Endothelial cell of umbilical vein (primary cell): ENCODE measurements at regions of chr19 and their contacts with region 1.

Region 1: DNA sequence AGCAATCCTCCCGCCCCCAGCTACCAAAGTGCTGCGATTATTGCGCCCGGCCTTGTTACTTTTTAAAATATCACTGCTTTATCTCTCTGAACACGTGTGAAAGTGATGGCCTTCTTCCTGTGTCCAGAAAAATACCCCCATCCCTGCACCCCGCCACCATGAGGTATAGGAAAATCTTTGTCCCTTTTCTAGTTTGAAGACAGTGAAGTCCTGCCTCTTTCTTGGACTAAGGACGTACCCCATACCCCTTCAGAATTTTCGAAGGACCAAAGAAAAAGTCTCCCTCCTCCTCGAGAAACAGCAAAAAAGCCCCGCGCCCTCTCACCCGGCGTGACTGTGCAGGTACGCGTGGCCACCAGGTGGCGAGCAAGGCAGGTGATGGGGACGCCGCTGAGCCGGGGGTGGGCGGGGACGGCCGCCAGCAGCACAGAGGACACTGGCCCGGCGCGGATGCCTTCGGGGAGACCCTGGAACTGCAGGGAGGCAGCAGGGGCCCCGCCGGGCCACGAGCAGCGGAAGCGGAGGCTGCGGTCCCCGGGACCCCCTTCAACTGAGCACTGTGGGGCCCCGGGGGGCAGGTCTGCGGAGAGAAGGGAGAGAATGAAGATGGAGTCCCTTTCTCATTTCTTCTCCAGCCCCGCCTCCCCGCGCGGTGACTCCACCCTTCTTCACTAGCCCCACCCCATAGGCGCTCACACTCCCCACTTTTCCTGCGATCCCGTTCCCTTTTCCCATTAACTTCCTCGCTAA is 3.2 kb downstream of the VSIG10L start:
- DNase-seq: peak; percentile 86
- H3K4me3 ChIP-seq: peak overlapping the region; percentile 55 to 82 (median 73)
- H3K27ac ChIP-seq: no peak overlapping the region
- H3K4me1 ChIP-seq: peaks cover 8% of the 10 kb centered on the region
- H3K27me3 ChIP-seq: no peaks in the 10 kb centered on the region
- CTCF ChIP-seq: peak; percentile 76 to 88
- POLR2A ChIP-seq: no peak

Region 2: DNA sequence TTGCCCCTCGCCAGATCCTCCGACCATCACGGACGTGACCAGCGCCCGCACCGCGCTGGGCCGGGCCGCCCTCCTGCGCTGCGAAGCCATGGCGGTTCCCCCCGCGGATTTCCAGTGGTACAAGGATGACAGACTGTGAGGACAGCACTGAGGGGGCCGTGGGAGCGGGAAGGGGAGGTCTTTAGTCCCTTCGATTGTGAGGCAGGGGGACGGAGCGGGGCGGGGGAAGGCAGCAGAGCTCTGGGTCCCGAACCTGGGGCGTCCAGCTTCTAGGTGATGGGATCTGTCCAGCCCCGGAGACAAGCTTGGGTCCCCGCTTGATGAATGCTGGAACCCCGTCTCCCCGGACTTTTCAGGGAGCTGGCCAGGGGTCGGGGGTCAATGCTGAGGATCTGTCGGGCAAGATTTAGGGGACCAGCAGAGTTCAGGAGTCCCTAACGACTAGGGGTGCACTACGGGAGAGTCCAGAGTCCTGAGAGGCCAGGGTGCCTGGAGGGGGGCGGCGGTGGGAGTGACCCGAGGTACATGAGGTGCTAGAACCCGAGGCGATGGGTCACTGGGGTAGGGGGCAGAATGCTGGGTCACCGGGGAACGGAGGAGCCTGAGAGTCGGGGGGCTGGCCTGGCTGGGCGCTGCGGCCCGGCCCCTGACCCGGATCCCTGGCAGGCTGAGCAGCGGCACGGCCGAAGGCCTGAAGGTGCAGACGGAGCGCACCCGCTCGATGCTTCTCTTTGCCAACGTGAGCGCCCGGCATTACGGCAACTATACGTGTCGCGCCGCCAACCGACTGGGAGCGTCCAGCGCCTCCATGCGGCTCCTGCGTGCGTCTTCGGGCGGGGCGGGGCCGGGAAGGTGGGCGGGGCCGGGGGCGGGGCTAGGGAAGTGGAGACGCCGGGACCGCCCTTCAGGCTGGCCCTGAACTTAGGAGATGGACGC is 11.4 kb before region 1 on chr19:
- CTCF ChIA-PET with region 1: no interaction called
- POLR2A ChIA-PET with region 1: no interaction called
- dilution Hi-C with region 1: no loop called
- intact Hi-C with region 1: no loop called
- DNase-seq: peak; percentile 30
- H3K4me3 ChIP-seq: peak overlapping the region in 1 of 3 experiments; percentile 15
- H3K27ac ChIP-seq: no peak overlapping the region
- H3K4me1 ChIP-seq: no peaks in the 10 kb centered on the region
- H3K27me3 ChIP-seq: peaks cover 6 to 7% of the 10 kb centered on the region in 2 experiments
- CTCF ChIP-seq: peak in 1 of 2 donors; percentile 20
- POLR2A ChIP-seq: no peak

Region 3: GRCh38 chr19:51359294-51359693 is 20.6 kb after region 1 on chr19:
- CTCF ChIA-PET with region 1: interaction called, 27 read pairs
- POLR2A ChIA-PET with region 1: interaction called, 6 read pairs
- dilution Hi-C with region 1: no loop called
- intact Hi-C with region 1: no loop called
- DNase-seq: no peak
- H3K4me3 ChIP-seq: no peak overlapping the region
- H3K27ac ChIP-seq: no peak overlapping the region
- H3K4me1 ChIP-seq: peaks cover 7% of the 10 kb centered on the region
- H3K27me3 ChIP-seq: no peaks in the 10 kb centered on the region
- CTCF ChIP-seq: no peak
- POLR2A ChIP-seq: no peak

Region 4: DNA sequence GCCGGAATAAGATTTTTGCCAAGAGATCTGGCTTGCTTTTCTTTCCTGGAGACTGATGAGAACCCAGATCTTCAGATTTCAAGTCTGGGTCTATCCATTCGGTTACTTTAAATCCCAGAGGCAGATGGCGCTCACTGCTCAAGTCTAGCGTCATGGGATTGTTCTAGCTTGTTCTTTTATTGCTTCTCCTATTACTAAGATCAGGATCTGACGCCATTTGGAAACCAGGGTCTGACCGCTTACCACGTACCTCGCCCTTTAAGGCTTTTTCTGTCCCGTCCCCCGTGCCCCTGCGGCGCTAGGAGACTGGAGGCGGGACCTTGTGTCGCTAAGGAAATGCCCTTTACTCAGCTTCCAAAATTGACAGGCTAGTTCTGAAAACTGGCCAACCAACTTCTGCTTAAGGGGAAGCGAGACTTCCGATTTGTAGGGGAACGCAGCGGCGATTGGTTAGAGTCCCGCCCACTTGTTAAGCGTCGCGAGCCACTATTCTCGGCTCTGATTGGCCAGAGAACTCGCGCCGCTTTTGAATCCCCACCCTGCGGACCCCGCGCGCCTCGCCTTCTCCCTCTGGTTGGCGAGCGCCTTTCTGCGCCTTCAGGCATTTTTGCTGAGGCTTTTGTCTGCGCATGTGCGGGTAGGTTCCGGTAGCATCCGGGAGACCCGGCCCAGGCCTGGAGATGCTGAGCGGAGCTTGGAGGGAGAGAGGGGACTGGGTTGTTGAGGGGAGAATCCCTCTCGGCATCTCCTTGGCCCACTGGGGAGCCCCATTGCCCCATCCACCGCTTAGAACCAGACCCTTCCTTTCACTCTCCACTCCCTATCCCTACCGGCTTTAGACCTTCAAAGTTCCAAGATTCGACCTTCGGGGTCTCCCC is 55.5 kb after region 1 on chr19:
- CTCF ChIA-PET with region 1: interaction called, 8 read pairs
- POLR2A ChIA-PET with region 1: no interaction called
- dilution Hi-C with region 1: no loop called
- intact Hi-C with region 1: loop called (anchors 1 kb)
- DNase-seq: peak; percentile 91
- H3K4me3 ChIP-seq: peak overlapping the region in 2 of 3 experiments; percentile 25 to 40
- H3K27ac ChIP-seq: peak overlapping the region; percentile 28
- H3K4me1 ChIP-seq: peaks cover 8% of the 10 kb centered on the region
- H3K27me3 ChIP-seq: no peaks in the 10 kb centered on the region
- CTCF ChIP-seq: no peak
- POLR2A ChIP-seq: peak; percentile 27

Region 5: DNA sequence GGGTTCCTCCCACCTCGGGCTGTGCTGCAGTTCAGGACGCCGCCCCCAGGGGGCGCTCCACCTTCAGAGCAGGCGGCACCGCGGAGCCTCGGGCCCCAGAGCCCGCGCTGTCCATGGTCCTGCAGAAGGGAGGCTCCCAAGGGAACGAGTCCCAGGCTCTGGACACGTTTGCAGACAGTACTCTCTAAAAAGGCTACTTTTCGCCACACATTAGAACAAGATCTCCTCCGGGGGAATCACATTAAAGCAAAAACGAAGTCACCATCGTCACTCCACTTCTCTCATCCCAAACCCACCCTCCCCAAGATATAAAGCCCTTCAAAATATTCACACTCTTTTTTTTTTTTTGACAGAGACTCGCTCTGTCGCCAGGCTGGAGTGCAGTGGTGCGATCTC is 83.3 kb after region 1 on chr19:
- CTCF ChIA-PET with region 1: interaction called, 7 read pairs
- POLR2A ChIA-PET with region 1: no interaction called
- dilution Hi-C with region 1: no loop called
- intact Hi-C with region 1: loop called (anchors 1 kb)
- DNase-seq: peak; percentile 67
- H3K4me3 ChIP-seq: no peak overlapping the region
- H3K27ac ChIP-seq: no peak overlapping the region
- H3K4me1 ChIP-seq: no peaks in the 10 kb centered on the region
- H3K27me3 ChIP-seq: no peaks in the 10 kb centered on the region
- CTCF ChIP-seq: peak; percentile 99
- POLR2A ChIP-seq: no peak